MCF 10A (cell line): ENCODE measurements at regions of chr11 and their contacts with region 1.

Region 1: GRCh38 chr11:124586238-124586860 is 16.6 kb downstream of the OR8A1 start:
- DNase-seq: peak; percentile 74
- H3K4me3 Mint-ChIP-seq: no peak overlapping the region
- H3K27ac Mint-ChIP-seq: no peak overlapping the region
- H3K4me1 Mint-ChIP-seq: no peaks in the 10 kb centered on the region
- H3K27me3 Mint-ChIP-seq: peaks cover 87% of the 10 kb centered on the region
- CTCF ChIP-seq: peak; percentile 52

Region 2: DNA sequence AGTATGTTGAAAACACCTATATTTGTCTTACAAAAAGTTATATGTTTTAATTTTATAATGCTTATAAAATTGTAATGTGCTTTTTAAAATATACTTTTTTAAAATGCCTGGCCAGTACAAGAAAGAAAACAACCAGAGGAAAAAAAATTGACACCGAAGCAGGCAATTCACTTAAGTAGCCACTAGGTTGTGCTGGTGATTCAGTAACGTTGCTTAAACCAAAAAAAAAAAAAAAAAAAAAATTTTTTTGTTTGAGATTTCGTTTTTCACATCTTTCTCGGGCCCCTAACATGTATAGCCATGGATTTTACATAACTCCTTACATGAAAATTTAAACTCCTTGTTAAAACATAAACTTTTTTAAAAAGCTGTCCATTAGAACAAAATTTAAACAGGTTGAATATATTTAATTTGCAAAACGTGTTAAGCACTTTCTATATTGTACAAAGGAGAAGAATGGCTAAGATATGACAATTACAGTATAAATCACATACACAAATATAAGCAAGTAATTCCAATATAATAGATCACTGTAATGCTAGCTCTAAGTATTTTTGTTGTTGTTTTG is 170.9 kb before region 1 on chr11:
- CTCF ChIA-PET with region 1: interaction called, 87 read pairs
- POLR2A ChIA-PET with region 1: interaction called, 3 read pairs
- intact Hi-C with region 1: loop called (anchors 1 kb)
- DNase-seq: peak; percentile 39
- H3K4me3 Mint-ChIP-seq: no peak overlapping the region
- H3K27ac Mint-ChIP-seq: no peak overlapping the region
- H3K4me1 Mint-ChIP-seq: no peaks in the 10 kb centered on the region
- H3K27me3 Mint-ChIP-seq: peaks cover 63% of the 10 kb centered on the region
- CTCF ChIP-seq: peak; percentile 67

Region 3: GRCh38 chr11:124611064-124611463 is 24.7 kb after region 1 on chr11 and contains the start of gene PANX3:
- CTCF ChIA-PET with region 1: interaction called, 10 read pairs
- POLR2A ChIA-PET with region 1: no interaction called
- intact Hi-C with region 1: no loop called
- DNase-seq: no peak
- H3K4me3 Mint-ChIP-seq: no peak within 1 kb of the TSS
- H3K27ac Mint-ChIP-seq: no peak within 1 kb of the TSS
- H3K4me1 Mint-ChIP-seq: no peaks in the 10 kb centered on the region
- H3K27me3 Mint-ChIP-seq: peaks cover 19% of the 10 kb centered on the region
- CTCF ChIP-seq: no peak
- total RNA-seq, gene PANX3: not detected in 2 replicates

Region 4: GRCh38 chr11:125091247-125091876 is 505.0 kb after region 1 on chr11:
- CTCF ChIA-PET with region 1: no interaction called
- POLR2A ChIA-PET with region 1: no interaction called
- intact Hi-C with region 1: no loop called
- DNase-seq: peak; percentile 40
- H3K4me3 Mint-ChIP-seq: no peak overlapping the region
- H3K27ac Mint-ChIP-seq: peak overlapping the region; percentile 13
- H3K4me1 Mint-ChIP-seq: peaks cover 13% of the 10 kb centered on the region
- H3K27me3 Mint-ChIP-seq: no peaks in the 10 kb centered on the region
- CTCF ChIP-seq: peak; percentile 42